ENCODE measurements at regions of chr15 and their contacts with region 1.

Region 1: GRCh38 chr15:48358229-48358641 is 27.0 kb downstream of the DUT start:
- DNase-seq: no peak
- ATAC-seq: peak; percentile 66
- H3K4me3 ChIP-seq: no peak overlapping the region
- H3K27ac ChIP-seq: no peak overlapping the region
- H3K4me1 ChIP-seq: no peaks in the 10 kb centered on the region
- H3K27me3 ChIP-seq: no peaks in the 10 kb centered on the region

Region 2: DNA sequence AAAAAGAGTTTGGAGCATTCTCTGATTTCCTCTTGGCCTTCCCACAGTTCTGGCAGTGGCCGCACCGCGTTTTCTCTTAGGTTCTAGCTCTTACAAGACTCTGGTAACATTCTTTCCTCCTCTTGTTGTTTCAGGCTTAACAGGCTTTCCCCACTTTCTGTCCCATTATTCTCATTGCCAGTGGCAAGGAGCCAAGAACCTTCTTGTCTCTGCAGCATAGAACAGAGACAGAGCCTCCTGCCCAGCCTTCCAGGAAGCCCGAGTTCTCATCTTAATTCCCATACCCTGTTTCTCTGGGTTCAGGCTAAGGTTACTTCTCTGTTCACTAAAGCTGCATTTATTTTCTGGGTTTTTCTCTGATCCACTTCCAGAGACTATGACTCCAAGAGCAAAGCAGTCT is 34.1 kb after region 1 on chr15:
- intact Hi-C with region 1: loop called in 1 of 2 experiments (anchors 5 kb)
- DNase-seq: peak in 1 of 2 donors; percentile 64
- ATAC-seq: peak; percentile 63
- H3K4me3 ChIP-seq: no peak overlapping the region
- H3K27ac ChIP-seq: peak overlapping the region; percentile 69 to 77
- H3K4me1 ChIP-seq: peaks cover 6 to 26% of the 10 kb centered on the region in 2 donors
- H3K27me3 ChIP-seq: no peaks in the 10 kb centered on the region

Region 3: GRCh38 chr15:48414015-48414414 is 55.8 kb after region 1 on chr15:
- intact Hi-C with region 1: loop called (anchors 5 to 10 kb)
- DNase-seq: no peak
- ATAC-seq: peak; percentile 49
- H3K4me3 ChIP-seq: no peak overlapping the region
- H3K27ac ChIP-seq: peak overlapping the region in 1 of 2 donors; percentile 14
- H3K4me1 ChIP-seq: peaks cover 9 to 12% of the 10 kb centered on the region in 2 donors
- H3K27me3 ChIP-seq: no peaks in the 10 kb centered on the region

Region 4: GRCh38 chr15:48810414-48811317 is 452.4 kb after region 1 on chr15 and contains the start of gene CEP152:
- intact Hi-C with region 1: loop called (anchors 5 to 10 kb)
- DNase-seq: peak; percentile 98 to 99
- ATAC-seq: peak; percentile 98
- H3K4me3 ChIP-seq: peak within 1 kb of the TSS; percentile 55 to 72
- H3K27ac ChIP-seq: no peak within 1 kb of the TSS
- H3K4me1 ChIP-seq: no peaks in the 10 kb centered on the region
- H3K27me3 ChIP-seq: no peaks in the 10 kb centered on the region
- total RNA-seq, gene CEP152: 5.2 to 7.6 TPM